CD8-positive, alpha-beta memory T cell (primary cell): ENCODE measurements at regions of chr18 and their contacts with region 1.

Region 1: DNA sequence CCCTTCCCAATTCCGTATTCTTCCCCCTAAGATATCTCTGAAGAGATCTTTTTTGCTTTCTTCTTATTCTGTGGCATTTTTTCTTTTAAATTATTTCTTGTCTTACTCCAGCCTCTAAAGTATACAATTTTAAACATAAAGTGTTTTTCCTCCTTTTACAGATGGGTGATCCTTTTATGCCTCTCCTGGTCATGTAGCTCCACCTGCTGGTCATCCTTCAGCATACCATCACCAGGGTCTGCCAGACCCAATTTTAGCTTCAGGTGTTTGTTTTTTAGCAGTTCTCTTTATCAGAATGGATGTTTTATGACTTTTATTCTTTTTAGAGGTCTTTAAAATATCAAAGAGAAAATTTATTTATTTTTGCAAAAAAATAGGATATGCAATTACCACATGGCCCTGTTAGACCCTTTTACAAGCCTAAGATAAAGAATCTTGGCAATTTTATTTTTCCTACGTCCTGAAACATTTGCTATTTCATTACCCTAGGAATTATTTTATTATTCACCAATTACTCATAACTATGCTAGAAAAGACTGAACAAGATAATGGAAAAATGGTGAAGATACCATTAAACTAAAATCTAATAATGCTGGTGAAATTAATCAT is 55.5 kb downstream of the PIGN start:
- DNase-seq: peak; percentile 10 to 55 (median 41)
- H3K4me3 ChIP-seq: no peak overlapping the region
- H3K4me3 Mint-ChIP-seq: no peak overlapping the region
- H3K27ac ChIP-seq: no peak overlapping the region
- H3K27ac Mint-ChIP-seq: no peak overlapping the region
- H3K4me1 ChIP-seq: no peaks in the 10 kb centered on the region
- H3K4me1 Mint-ChIP-seq: peaks cover 0 to 4% (median 0%) of the 10 kb centered on the region in 3 donors
- H3K27me3 ChIP-seq: no peaks in the 10 kb centered on the region
- H3K27me3 Mint-ChIP-seq: no peaks in the 10 kb centered on the region

Region 2: GRCh38 chr18:61581578-61582201 is 549.7 kb before region 1 on chr18:
- CTCF ChIA-PET with region 1: interaction called, 24 read pairs
- POLR2A ChIA-PET with region 1: no interaction called
- DNase-seq: peak; percentile 36 to 70 (median 45)
- H3K4me3 ChIP-seq: no peak overlapping the region
- H3K4me3 Mint-ChIP-seq: peak overlapping the region in 2 of 7 donors; percentile 21 to 48
- H3K27ac ChIP-seq: no peak overlapping the region
- H3K27ac Mint-ChIP-seq: peak overlapping the region in 1 of 8 donors; percentile 17
- H3K4me1 ChIP-seq: peaks cover 5% of the 10 kb centered on the region
- H3K4me1 Mint-ChIP-seq: peaks cover 7 to 12% (median 7%) of the 10 kb centered on the region in 3 donors
- H3K27me3 ChIP-seq: peaks cover 4% of the 10 kb centered on the region
- H3K27me3 Mint-ChIP-seq: peaks cover 16 to 40% of the 10 kb centered on the region in 2 donors